GM10248 (cell line): ENCODE measurements at regions of chr5 and their contacts with region 1.

Region 1: DNA sequence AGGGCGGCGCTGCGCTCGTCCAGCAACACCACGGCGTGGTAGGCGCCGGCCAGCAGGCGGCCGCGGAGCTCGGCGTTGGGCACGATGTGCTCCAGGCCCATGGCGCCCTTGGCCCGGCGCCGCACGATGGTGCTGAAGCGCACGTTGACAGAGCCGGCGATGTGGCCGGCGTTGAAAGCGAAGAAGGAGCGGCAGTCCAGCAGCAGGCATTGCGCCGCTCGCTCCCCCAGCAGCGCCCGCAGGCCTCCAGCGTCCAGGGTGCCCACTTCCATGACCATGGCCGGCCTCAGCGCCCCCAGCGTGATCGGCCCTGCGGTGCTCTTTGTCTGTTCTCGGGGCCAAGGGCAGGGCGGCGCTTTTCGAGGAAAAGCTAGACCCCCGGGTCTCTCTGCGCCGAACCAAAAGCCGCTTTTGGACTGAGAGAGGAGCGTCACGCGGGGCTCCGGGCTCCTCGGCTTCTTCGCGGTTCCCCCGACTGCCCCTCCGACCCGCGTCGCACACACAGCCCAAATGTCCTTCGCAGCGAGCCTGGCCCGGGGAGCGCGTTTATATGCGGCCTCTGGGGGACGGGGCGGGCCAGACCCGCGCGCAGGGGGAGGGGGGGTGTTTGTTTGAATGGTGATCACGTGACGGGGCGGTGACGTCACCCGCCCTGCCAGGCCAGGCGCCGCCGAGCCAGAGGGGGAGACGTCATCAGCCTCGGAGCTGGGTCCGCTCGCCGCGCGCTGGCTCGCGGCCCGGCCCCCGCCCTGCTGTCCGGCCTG is at the start of gene DUSP1:
- DNase-seq: peak; percentile 97
- CTCF ChIP-seq: peak; percentile 68

Region 2: DNA sequence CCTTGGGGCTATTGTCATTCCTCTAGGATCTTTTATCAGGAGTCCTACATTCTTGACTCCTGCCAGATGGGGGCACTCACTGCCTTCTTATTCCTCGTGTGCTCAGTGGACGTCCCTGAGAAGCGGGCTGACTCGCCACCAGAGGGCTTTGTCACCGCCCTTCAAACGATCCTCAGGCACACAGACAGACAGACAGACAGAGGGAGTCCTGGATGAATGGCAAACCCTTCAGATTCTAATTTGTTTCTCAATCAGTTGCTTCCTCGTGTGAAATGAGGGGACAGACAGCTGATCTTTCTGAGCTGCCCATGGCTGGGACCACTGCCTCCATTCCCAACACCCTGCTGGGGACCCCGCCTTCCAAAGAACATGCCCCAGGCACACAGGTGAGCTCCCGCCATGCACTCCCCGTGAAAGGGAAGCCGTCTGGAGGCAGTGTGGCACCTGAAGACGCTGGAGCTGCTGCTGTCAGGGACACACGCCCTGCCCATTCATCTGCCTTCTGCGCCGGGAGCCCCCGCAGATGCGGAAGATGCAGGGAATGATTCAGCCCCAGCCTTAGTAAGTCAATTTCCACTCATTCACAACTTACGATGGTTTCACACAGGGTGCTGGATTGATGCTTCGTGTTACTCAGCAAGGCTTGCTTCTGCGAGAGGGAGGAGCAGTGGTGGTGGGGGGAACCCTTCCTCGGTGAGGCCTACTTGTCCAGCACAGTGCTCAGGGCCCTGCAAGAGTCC is 291.6 kb before region 1 on chr5:
- CTCF ChIA-PET with region 1: no interaction called
- POLR2A ChIA-PET with region 1: no interaction called
- DNase-seq: peak; percentile 85
- CTCF ChIP-seq: peak; percentile 76

Region 3: DNA sequence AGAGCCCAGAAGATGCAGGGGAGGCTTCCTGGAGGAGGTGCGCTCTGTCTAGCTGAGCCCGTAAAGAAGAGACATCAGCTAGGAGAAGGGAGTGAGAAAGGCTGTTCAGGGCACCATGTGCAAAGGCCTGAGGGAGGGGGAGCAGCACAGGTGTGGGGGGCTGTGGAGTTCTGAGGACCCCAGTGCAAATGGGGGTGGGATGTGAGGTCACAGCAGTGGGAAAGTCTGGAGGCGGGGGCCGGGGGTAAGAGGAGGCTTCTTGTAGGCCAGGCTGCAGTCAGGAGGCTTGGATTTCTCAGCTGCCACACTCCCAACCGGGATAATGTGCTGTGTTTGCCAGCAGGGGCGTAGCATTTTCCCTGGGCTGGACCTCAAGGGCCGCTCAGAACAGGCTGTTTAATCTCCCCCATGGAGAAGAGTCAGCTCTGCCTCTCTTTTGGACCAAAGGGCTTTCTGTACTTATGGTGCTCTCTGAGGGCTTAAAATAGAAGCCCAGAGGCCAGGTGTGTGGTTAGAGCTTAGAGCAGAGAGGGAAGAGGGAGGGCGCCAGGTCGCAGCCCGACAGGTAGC is 124.1 kb before region 1 on chr5:
- CTCF ChIA-PET with region 1: no interaction called
- POLR2A ChIA-PET with region 1: interaction called, 13 read pairs
- DNase-seq: no peak
- CTCF ChIP-seq: no peak

Region 4: DNA sequence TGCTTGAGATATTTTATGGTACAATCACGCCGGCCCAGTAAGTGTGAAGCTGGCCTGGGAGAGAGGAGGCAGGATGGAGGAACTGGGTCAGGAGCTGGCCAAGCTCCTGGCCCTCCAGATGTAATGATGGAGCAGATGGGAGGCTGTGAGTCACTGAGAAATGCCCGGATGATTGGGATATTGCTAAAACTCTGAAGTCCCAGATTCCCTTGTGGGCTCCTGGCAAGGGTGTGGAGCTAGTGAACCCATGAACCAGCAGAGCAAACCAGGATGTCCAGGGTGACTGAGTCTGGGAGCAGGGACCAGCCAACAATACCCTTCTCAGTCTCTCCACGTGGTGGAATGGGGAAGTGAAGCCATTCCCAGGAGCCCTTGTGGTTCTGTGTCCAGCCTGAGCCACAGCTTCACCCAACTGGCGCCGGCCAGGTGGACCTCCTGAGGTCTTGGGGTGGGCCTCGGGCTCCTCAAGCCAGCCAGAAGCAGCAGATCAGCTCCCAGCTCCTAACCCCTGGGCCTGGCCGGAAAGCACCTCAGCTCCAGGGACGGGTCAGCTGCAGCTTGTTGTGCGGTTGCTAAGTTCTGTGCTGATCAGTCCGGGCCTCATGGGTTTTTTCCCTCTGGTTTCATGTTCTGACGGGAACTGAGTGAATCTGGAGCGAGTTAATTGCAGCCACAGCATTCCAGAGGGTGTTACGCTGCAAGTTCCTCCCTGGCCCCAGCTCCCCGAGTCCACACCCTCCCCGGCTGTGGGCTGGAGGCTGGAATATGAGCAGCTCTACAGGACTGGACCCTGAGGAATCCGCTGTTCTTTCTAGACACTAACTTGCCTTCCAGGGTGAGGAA is 37.5 kb before region 1 on chr5:
- CTCF ChIA-PET with region 1: no interaction called
- POLR2A ChIA-PET with region 1: no interaction called
- DNase-seq: no peak
- CTCF ChIP-seq: no peak

Region 5: GRCh38 chr5:172758083-172758833 is 12.6 kb before region 1 on chr5:
- CTCF ChIA-PET with region 1: interaction called, 10 read pairs
- POLR2A ChIA-PET with region 1: interaction called, 13 read pairs
- DNase-seq: no peak
- CTCF ChIP-seq: no peak

Region 6: DNA sequence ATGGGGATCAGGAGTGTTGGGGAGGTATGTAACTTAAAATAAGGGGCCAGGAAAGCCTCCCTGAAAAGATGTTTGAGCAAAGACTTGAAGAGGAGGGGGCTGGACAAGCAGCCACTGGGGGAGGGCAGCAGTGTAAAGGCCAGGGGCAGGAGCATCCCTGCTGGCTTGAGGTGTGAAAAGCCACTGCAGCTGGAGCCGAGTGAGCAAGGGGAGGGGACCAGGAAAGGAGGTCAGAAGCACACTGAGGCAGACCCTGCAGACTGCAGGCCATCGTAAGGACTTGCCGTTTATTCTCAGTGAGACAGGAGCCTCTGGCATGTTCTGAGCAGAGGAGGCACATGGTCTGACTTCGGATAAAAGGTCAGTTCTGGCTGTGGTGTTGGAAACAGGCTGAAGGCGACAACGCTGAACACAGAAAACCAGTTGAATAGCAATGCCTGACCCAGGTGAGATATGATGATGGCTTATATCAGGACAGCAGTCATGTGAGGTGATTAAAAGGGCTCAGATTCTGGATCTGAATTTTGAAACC is 53.0 kb after region 1 on chr5:
- CTCF ChIA-PET with region 1: no interaction called
- POLR2A ChIA-PET with region 1: no interaction called
- DNase-seq: no peak
- CTCF ChIP-seq: no peak

Region 7: GRCh38 chr5:172834415-172835289 is 63.8 kb after region 1 on chr5:
- CTCF ChIA-PET with region 1: interaction called, 10 read pairs
- POLR2A ChIA-PET with region 1: interaction called, 12 read pairs
- DNase-seq: peak; percentile 45
- CTCF ChIP-seq: no peak

Region 8: GRCh38 chr5:172849606-172850453 is 79.0 kb after region 1 on chr5:
- CTCF ChIA-PET with region 1: interaction called, 8 read pairs
- POLR2A ChIA-PET with region 1: interaction called, 10 read pairs
- DNase-seq: peak; percentile 48
- CTCF ChIP-seq: no peak